Aorta (tissue), 5 donors: ENCODE measurements at regions of chr18 and their contacts with region 1.

Region 1: GRCh38 chr18:31555971-31556747 is 35.5 kb upstream of the TTR start:
- DNase-seq: no peak
- ATAC-seq: peak; percentile 83
- H3K4me3 ChIP-seq: no peak overlapping the region
- H3K27ac ChIP-seq: no peak overlapping the region
- H3K4me1 ChIP-seq: no peaks in the 10 kb centered on the region
- H3K27me3 ChIP-seq: no peaks in the 10 kb centered on the region

Region 2: GRCh38 chr18:31722369-31722957 is 166.3 kb after region 1 on chr18:
- intact Hi-C with region 1: loop called (anchors 5 to 10 kb)
- DNase-seq: peak; percentile 79 to 86
- ATAC-seq: peak; percentile 90
- H3K4me3 ChIP-seq: no peak overlapping the region
- H3K27ac ChIP-seq: no peak overlapping the region
- H3K4me1 ChIP-seq: no peaks in the 10 kb centered on the region
- H3K27me3 ChIP-seq: no peaks in the 10 kb centered on the region

Region 3: DNA sequence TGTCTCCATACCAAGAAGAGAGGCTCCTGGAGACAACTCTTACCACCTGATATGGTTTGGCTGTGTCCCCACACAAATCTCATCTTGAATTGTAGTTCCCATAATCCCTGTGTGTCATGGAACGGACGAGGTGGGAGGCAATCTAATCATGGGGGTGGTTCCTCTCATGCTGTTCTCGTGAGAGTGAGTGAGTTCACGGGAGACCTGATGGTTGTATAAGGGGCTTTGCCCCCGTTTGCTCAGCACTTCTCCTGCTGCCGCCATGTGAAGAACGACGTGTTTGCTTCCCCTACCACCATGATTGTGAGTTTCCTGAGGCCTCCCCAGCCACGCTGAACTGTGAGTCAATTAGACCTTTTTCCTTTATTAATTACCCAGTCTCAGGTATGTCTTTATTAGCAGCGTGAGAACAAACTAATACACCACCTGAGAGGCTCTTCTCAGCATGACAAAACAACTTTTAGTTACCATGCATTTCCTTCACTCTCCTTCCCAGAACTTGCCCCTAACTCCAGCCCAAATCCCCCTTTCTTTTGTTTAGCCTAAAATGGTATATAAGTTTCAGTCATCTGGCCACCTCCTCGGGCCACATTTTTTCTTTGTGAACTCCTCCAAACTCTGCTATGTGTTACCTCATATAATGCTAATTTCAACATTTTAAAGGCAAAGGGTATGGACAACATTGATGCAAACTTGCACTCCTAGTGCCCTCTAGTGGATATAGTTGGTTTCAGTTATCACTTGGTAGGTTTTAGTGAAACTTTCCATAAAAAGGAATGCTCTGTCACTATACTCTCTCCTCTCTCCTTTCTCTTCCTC is 263.2 kb after region 1 on chr18:
- intact Hi-C with region 1: loop called (anchors 5 kb)
- DNase-seq: no peak
- ATAC-seq: no peak
- H3K4me3 ChIP-seq: no peak overlapping the region
- H3K27ac ChIP-seq: no peak overlapping the region
- H3K4me1 ChIP-seq: no peaks in the 10 kb centered on the region
- H3K27me3 ChIP-seq: no peaks in the 10 kb centered on the region